ENCODE measurements at regions of chr21 and their contacts with region 1.

Region 1: DNA sequence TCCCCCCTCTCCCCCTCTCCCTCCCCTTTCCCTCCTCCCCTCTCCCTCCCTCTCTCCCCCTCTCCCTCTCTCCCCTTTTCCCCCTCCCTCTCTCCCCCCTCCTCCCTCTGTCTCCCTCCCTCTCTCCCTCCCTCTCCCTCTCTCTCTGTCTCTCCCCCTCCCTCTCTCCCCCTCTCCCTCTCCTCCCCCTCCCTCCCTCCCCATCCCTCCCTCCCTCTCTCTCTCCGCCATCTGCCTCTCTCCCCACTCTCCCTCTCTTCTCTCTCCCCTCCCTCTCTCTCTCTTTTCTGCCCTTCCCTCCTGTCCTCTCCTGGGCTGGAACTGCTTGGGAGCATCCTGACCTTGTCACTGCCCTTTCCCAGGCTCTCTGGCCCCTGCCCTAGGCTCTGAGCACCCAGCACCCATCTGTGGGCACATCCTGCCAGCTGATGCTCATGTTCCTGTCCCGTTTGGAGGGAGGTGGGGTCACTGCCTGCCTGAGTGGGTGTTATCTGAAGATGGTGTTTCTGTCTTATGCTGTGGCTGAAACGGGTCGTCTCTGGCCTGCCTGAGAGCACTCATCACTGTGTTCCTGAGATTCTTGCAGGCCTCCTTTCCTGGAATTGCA is 10.8 kb downstream of the FTCD start:
- DNase-seq: no peak
- ATAC-seq: no peak
- H3K4me3 Mint-ChIP-seq: no peak overlapping the region
- H3K27ac Mint-ChIP-seq: no peak overlapping the region
- H3K4me1 Mint-ChIP-seq: peaks cover 10% of the 10 kb centered on the region
- H3K27me3 Mint-ChIP-seq: no peaks in the 10 kb centered on the region
- CTCF ChIP-seq: no peak

Region 2: DNA sequence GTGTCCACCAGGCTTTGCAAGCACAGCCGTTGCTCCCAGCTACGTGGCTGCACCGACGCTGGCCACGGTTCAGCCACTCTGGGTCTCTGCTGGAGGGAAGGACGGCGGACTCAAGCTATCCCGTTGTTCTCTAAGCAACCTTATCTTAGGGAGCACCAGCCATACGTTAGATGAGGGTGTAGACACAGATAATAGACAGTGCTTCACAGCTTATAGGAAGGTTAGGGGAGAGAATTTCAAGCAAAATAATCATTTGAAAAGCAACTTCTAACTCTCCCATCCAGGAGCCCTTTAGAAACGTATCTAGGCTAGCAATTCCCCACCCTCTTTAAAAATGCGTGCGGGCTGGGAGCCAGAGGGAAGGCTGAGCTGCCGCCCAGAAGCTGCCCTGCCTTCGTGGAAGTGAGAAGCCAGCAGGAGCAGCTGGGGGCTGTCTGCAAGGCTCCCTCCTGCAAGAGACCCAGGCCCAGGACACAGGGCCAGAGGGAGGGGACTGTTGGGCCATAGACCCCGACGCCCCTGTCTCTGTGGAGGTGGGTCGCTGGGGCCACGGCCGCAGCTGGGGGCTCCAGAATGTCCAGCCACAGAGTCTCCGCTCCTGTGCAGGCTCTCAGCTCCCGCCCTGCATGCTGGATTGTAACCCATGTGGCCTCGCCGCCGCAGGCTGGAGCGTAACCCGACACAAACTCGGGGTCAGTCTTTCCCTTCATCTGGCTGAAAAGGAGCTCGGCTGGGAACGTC is 77.8 kb before region 1 on chr21:
- CTCF ChIA-PET with region 1: interaction called, 12 read pairs
- POLR2A ChIA-PET with region 1: no interaction called
- DNase-seq: no peak
- ATAC-seq: peak; percentile 59
- H3K4me3 Mint-ChIP-seq: no peak overlapping the region
- H3K27ac Mint-ChIP-seq: no peak overlapping the region
- H3K4me1 Mint-ChIP-seq: peaks cover 23% of the 10 kb centered on the region
- H3K27me3 Mint-ChIP-seq: peaks cover under 1% of the 10 kb centered on the region
- CTCF ChIP-seq: no peak

Region 3: DNA sequence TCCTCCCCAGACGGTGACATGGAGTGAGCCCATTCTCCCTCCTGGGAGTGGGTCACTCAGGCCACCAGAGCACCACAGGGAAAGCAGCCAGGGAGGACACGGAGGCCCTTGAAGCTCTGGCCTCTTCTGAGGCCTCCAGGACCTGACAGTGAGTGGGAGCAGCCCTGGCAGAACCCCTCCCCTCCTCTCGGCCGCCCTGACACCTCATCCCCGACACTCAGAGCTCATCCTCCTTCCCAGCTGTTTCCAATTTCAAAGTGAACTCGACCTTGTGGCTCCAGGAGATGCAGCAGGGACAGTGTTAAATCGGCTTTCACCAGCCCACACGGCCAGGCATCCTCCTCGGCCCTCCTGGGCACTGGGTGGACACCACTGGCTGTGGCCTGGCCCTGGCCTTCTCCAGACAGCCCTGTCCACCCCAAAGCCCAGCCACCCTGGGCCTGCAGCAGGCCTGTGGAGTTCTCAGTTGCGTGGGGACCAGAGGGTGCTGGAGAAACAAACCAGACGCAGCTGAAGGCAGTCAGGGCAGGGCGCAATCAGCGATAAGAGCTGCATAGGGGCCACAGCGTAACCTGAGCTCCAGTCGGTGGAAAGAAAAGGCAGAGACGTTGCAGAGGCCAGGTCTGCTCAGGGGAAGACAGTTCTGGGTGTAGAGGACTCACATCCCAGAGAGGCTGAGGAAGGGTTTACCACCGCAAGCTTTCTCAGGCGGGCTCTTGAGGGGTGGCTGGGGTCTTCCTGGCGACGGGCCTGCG is 16.3 kb before region 1 on chr21:
- CTCF ChIA-PET with region 1: interaction called, 18 read pairs
- POLR2A ChIA-PET with region 1: interaction called, 3 read pairs
- DNase-seq: no peak
- ATAC-seq: no peak
- H3K4me3 Mint-ChIP-seq: no peak overlapping the region
- H3K27ac Mint-ChIP-seq: peak overlapping the region; percentile 68; the same call in 1 of the 2 replicates
- H3K4me1 Mint-ChIP-seq: no peaks in the 10 kb centered on the region
- H3K27me3 Mint-ChIP-seq: no peaks in the 10 kb centered on the region; the same call in 1 of the 2 replicates
- CTCF ChIP-seq: no peak

Region 4: DNA sequence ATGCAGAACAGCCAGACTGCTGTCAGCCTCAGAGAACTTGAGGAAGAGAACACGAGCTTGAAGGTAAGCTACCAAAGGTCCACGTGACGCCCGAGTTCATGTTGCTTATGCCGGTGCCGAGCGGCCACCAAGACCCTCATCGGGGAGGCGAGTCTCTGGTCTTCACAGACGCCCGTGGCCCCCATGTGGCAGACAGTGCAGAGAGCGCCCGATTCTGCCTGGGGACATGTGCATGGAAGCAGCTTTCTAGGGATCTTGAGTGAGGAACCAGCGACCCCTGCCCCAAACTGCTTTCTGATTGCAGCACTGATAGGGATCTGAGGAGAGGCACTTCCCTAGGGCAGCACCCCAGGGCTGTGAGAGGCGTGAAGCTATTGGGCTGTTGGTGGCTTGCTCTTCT is 257.9 kb after region 1 on chr21:
- CTCF ChIA-PET with region 1: no interaction called
- POLR2A ChIA-PET with region 1: no interaction called
- DNase-seq: no peak
- ATAC-seq: peak; percentile 26
- H3K4me3 Mint-ChIP-seq: no peak overlapping the region
- H3K27ac Mint-ChIP-seq: no peak overlapping the region
- H3K4me1 Mint-ChIP-seq: no peaks in the 10 kb centered on the region
- H3K27me3 Mint-ChIP-seq: no peaks in the 10 kb centered on the region
- CTCF ChIP-seq: no peak